ENCODE measurements at regions of chr2 and their contacts with region 1.

Region 1: DNA sequence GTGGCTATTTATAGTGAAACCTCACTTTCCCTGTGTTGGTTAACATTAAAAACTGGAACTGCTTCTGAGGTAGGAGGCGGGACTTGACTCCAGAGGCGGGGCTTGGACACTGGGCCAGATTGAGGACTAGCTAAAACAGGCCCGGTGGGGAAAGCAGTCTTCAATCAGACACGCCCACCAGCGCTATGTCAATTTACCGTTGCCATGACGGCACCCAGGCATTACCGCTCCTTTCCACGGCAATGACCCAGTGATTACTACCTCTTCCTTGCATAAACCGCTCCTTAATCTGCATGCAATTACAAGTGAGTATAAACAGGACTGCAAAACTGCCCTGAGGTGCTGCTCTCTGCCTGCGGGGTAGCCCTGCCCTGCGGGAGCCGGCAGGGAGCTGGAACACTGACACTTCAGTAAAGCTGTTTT is 35.3 kb downstream of the LRRFIP1 start:
- DNase-seq: peak; percentile 82 to 97
- H3K4me3 ChIP-seq: no peak overlapping the region
- H3K27ac ChIP-seq: peak overlapping the region; percentile 60 to 74
- H3K4me1 ChIP-seq: peaks cover 13 to 22% of the 10 kb centered on the region in 2 donors
- H3K27me3 ChIP-seq: no peaks in the 10 kb centered on the region
- CTCF ChIP-seq: no peak

Region 2: DNA sequence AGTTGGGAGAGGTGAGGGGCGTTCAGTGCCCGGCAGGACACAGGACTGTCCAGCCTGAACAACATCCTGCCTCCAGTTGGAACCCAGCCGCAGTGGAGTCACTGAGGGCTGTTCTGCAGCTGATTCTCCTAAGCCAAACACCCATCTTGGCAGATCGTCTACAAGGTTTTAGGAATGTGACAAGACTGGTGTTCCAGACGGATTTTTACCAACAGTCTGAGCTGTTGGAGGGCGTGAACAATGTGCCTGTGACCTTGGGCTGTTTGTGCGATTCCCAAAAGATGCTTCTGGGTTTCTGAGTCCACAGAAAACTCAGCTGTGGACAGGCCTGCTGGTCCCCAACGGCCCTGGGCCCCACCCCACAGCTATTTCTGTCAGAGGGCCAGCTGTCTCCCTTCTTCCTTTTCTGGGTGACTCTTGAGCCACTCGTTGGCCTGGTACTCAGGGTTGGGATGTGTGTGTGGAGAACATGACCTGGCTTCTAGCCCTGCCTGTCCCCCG is 29.6 kb before region 1 on chr2:
- intact Hi-C with region 1: loop called (anchors 2 kb)
- DNase-seq: peak in 1 of 2 donors; percentile 81
- H3K4me3 ChIP-seq: peak overlapping the region in 1 of 2 donors; percentile 27
- H3K27ac ChIP-seq: peak overlapping the region; percentile 84 to 91
- H3K4me1 ChIP-seq: peaks cover 30 to 56% of the 10 kb centered on the region in 2 donors
- H3K27me3 ChIP-seq: no peaks in the 10 kb centered on the region
- CTCF ChIP-seq: no peak

Region 3: DNA sequence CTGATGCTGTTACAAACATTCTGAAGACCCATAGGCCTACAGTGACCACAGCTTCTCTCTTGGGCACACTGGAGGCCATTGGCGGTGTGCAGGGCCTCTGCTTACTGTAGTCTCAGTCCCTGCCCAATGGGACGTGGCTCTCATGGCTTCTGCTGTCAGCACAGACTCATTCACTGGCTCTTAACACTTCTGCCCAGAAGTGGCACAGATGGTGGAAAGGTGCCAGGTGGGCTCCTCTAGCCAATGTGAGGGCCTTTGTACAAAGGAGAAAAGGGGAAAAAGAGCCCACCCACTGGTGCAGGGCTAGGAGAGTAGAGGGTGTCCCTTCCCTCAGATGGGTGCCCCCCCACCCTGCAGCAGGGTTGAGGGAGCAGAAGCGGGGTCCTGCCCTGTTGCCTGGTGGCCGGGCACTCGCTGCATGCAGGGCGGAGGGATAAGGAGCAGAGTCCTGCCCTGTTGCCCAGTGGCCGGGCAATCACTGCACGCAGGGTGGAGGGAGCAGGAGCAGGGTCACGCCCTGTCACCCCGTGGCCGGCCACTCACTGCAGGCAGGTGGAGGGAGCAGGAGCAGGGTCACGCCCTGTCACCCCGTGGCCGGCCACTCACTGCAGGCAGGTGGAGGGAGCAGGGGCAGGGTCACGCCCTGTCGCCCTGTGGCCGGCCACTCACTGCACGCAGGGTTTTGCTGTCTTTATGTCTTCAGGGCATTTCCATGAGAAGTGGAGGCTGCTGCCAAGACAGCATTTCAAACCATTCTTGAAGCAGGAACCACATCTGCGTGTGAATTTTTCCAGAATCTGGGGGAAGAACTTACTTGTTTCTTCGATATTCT is 15.3 kb before region 1 on chr2:
- intact Hi-C with region 1: no loop called
- DNase-seq: no peak
- H3K4me3 ChIP-seq: peak overlapping the region in 1 of 2 donors; percentile 16
- H3K27ac ChIP-seq: peak overlapping the region; percentile 31 to 91
- H3K4me1 ChIP-seq: peaks cover 8 to 27% of the 10 kb centered on the region in 2 donors
- H3K27me3 ChIP-seq: no peaks in the 10 kb centered on the region
- CTCF ChIP-seq: no peak

Region 4: GRCh38 chr2:237700512-237701032 is 37.9 kb after region 1 on chr2:
- intact Hi-C with region 1: loop called (anchors 5 kb)
- DNase-seq: peak; percentile 73 to 86
- H3K4me3 ChIP-seq: peak overlapping the region; percentile 2 to 35
- H3K27ac ChIP-seq: peak overlapping the region; percentile 97 to 99
- H3K4me1 ChIP-seq: peaks cover 56 to 94% of the 10 kb centered on the region in 2 donors
- H3K27me3 ChIP-seq: no peaks in the 10 kb centered on the region
- CTCF ChIP-seq: no peak

Region 5: GRCh38 chr2:238216651-238217184 is 554.0 kb after region 1 on chr2:
- intact Hi-C with region 1: no loop called
- DNase-seq: no peak
- H3K4me3 ChIP-seq: no peak overlapping the region
- H3K27ac ChIP-seq: no peak overlapping the region
- H3K4me1 ChIP-seq: no peaks in the 10 kb centered on the region
- H3K27me3 ChIP-seq: no peaks in the 10 kb centered on the region
- CTCF ChIP-seq: no peak

Measured in ascending aorta (tissue), 2 donors.